Right cardiac atrium (tissue), 5 donors: ENCODE measurements at regions of chr2 and their contacts with region 1.

Region 1: GRCh38 chr2:54899576-54900200 is 150.6 kb downstream of the RTN4 start:
- DNase-seq: no peak
- ATAC-seq: peak; percentile 66 to 70
- H3K4me3 ChIP-seq: no peak overlapping the region
- H3K27ac ChIP-seq: no peak overlapping the region
- H3K4me1 ChIP-seq: no peaks in the 10 kb centered on the region
- H3K27me3 ChIP-seq: no peaks in the 10 kb centered on the region

Region 2: DNA sequence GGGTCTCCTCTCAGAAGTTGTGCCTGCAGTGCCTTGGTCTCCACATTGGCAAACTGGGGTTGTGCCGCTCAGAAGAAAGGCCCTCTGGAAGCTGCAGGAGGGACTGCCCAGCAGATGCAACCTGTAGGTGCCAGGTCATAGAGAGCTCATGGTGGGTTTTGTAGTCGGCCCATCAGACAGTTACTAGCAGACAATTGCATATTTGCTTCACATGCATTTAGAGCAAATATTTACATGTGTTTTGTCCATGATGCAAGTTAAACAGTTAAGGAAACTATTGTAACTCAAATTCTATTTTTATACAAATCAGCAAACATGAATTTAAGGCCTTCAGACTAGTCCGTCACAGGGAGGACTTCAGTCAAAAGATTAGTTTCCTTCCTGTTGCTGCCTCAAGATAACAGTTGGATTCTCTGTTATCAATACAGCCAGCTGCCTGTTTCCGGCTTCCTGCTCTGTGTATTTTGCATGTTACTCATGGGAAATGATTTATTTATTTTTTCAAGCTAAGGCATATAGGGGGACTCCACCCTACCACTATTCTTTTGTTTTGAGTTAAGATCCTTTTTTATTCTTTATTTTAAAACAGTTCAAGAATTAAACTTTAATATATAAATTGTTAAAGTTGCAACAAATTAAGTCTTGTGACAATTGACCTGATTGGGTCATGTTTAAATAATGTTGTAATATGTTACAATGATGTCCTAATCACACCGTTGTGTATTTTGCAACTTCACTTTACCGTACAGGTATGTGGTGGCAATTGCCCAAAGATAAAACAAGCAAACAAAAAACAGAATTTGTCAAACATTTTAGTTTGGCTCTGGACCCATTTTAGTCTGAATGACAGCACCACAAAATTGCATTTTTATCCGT is 310.1 kb before region 1 on chr2:
- intact Hi-C with region 1: no loop called
- DNase-seq: no peak
- ATAC-seq: peak; percentile 77 to 88
- H3K4me3 ChIP-seq: no peak overlapping the region
- H3K27ac ChIP-seq: peak overlapping the region; percentile 92
- H3K4me1 ChIP-seq: peaks cover 22% of the 10 kb centered on the region
- H3K27me3 ChIP-seq: no peaks in the 10 kb centered on the region

Region 3: DNA sequence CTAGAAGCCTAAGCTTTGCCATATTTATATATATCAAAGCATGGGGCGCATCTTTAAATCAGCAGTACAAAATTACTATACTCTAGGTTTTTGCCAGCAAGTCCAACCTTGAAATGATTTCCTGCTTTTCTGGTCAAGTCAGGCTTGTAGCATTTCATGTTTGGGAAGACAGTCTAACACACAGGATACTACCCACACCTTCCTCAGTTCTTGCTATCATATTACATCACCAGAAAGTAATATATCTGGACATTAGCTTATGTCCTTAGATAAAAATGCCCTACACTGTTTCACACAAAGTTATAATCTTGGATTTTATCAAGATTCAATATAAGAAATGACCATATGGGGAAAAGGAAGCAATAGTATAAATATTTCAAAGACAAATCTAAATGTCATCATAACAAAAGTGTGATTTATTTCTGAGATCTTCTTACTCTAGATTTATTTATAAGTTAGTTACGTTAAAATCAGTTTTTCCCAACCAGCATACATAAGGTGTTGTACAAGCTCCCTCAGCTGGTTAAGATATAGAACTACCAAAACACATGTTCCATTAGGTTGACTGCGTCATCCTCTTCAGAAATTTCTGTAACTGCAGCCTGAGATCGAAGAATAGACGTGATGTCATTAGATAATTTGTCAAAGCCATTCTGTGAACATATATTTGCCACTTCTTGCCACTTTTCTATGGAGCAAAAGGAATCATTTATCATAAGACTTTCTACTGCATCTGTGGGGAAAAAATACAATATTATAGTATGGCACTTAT is 275.8 kb after region 1 on chr2:
- intact Hi-C with region 1: loop called (anchors 5 kb)
- DNase-seq: no peak
- ATAC-seq: peak; percentile 73 to 78
- H3K4me3 ChIP-seq: no peak overlapping the region
- H3K27ac ChIP-seq: no peak overlapping the region
- H3K4me1 ChIP-seq: no peaks in the 10 kb centered on the region
- H3K27me3 ChIP-seq: no peaks in the 10 kb centered on the region